ENCODE measurements at regions of chr11 and their contacts with region 1.

Region 1: GRCh38 chr11:39236916-39237315 is 2222.5 kb downstream of the LRRC4C start:
- DNase-seq: no peak
- ATAC-seq: no peak
- H3K4me3 Mint-ChIP-seq: no peak overlapping the region
- H3K27ac Mint-ChIP-seq: no peak overlapping the region
- H3K4me1 Mint-ChIP-seq: no peaks in the 10 kb centered on the region
- H3K27me3 Mint-ChIP-seq: no peaks in the 10 kb centered on the region
- CTCF ChIP-seq: no peak

Region 2: GRCh38 chr11:39174196-39174595 is 62.7 kb before region 1 on chr11:
- CTCF ChIA-PET with region 1: no interaction called
- POLR2A ChIA-PET with region 1: no interaction called
- intact Hi-C with region 1: no loop called
- DNase-seq: no peak
- ATAC-seq: no peak
- H3K4me3 Mint-ChIP-seq: no peak overlapping the region
- H3K27ac Mint-ChIP-seq: no peak overlapping the region
- H3K4me1 Mint-ChIP-seq: no peaks in the 10 kb centered on the region
- H3K27me3 Mint-ChIP-seq: no peaks in the 10 kb centered on the region
- CTCF ChIP-seq: no peak

Region 3: GRCh38 chr11:39209981-39210380 is 26.9 kb before region 1 on chr11:
- CTCF ChIA-PET with region 1: no interaction called
- POLR2A ChIA-PET with region 1: interaction called, 15 read pairs
- intact Hi-C with region 1: no loop called
- DNase-seq: no peak
- ATAC-seq: no peak
- H3K4me3 Mint-ChIP-seq: no peak overlapping the region
- H3K27ac Mint-ChIP-seq: no peak overlapping the region
- H3K4me1 Mint-ChIP-seq: no peaks in the 10 kb centered on the region
- H3K27me3 Mint-ChIP-seq: no peaks in the 10 kb centered on the region
- CTCF ChIP-seq: no peak

Region 4: DNA sequence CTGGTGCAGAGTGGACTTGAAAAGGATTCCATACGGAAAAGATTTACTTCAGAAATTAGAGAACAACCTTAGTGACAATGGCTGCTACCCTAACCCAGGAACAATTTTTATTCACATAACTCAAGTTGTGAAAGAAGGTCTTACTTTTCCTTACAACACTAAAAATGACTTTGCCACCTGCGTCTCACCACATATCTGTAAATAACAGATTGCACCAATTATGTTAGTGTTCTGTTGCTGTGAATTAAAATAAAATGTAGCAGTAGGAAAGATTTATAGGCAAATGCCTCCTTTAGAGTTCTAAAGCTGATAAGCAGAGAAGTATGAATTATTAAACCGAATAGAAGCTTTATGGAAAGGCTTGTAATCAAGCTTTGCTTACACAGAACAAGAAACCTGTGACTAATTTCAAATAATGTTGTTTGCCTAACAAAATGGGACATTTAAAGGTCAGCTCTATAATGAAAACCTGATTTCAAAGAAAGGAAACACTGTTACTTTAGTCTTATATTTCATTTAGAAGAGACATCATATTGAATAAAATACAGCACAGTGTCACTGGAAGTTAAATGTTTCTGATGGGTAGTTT is 15.3 kb before region 1 on chr11:
- CTCF ChIA-PET with region 1: no interaction called
- POLR2A ChIA-PET with region 1: no interaction called
- intact Hi-C with region 1: no loop called
- DNase-seq: no peak
- ATAC-seq: no peak
- H3K4me3 Mint-ChIP-seq: no peak overlapping the region
- H3K27ac Mint-ChIP-seq: no peak overlapping the region
- H3K4me1 Mint-ChIP-seq: no peaks in the 10 kb centered on the region
- H3K27me3 Mint-ChIP-seq: no peaks in the 10 kb centered on the region
- CTCF ChIP-seq: no peak

Region 5: DNA sequence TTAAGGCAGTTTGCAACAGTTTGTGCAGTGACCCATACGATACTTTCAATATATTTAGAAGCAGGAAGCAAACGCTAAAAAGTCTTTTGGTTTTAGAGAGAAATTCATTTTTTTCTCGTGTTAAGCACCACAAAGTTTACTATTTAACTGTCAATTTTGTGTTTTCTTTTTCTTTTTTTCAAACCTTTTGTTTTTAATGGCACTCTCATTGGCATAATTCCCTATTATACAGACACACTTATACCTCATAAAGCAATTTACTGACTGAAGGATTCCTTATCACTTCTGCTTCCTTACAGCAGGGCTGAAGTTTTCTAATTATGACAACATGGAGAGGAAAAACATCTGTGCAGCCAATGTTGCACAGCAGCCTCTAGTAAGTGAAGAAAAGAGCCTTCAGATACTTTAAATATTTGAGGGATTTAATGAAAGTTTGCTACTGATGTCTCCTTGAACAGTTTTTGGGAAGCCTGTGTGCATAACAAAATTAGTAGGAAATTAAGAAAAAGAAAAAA is 31.3 kb after region 1 on chr11:
- CTCF ChIA-PET with region 1: no interaction called
- POLR2A ChIA-PET with region 1: no interaction called
- intact Hi-C with region 1: no loop called
- DNase-seq: no peak
- ATAC-seq: no peak
- H3K4me3 Mint-ChIP-seq: no peak overlapping the region
- H3K27ac Mint-ChIP-seq: no peak overlapping the region
- H3K4me1 Mint-ChIP-seq: no peaks in the 10 kb centered on the region
- H3K27me3 Mint-ChIP-seq: no peaks in the 10 kb centered on the region
- CTCF ChIP-seq: no peak

Measured in activated B cell treated with CpG ODN at 0.5 μM for 24 hours (primary cell).